ENCODE measurements at regions of chr6 and their contacts with region 1.

Region 1: GRCh38 chr6:44074439-44075136 is 52.7 kb downstream of the MRPL14 start:
- DNase-seq: peak; percentile 83
- H3K4me3 ChIP-seq: no peak overlapping the region
- H3K27ac ChIP-seq: peak overlapping the region; percentile 27
- H3K4me1 ChIP-seq: peaks cover 61% of the 10 kb centered on the region
- H3K27me3 ChIP-seq: no peaks in the 10 kb centered on the region
- CTCF ChIP-seq: peak; percentile 92

Region 2: GRCh38 chr6:43516697-43517504 is 557.7 kb before region 1 on chr6 and contains the starts of genes POLR1C and YIPF3:
- CTCF ChIA-PET with region 1: no interaction called
- dilution Hi-C with region 1: no loop called
- in situ Hi-C with region 1: no loop called
- intact Hi-C with region 1: loop called (anchors 10 kb)
- DNase-seq: peak; percentile 97
- H3K4me3 ChIP-seq: peak within 1 kb of the TSS; percentile 76 to 98 (median 93)
- H3K27ac ChIP-seq: peak within 1 kb of the TSS; percentile 91
- H3K4me1 ChIP-seq: peaks cover 17% of the 10 kb centered on the region
- H3K27me3 ChIP-seq: no peaks in the 10 kb centered on the region
- CTCF ChIP-seq: no peak
- total RNA-seq, gene POLR1C: 28.2 to 50.5 TPM
- total RNA-seq, gene YIPF3: 71.2 to 83.8 TPM

Region 3: GRCh38 chr6:43667245-43668150 is 407.1 kb before region 1 on chr6:
- CTCF ChIA-PET with region 1: interaction called, 7 read pairs
- dilution Hi-C with region 1: no loop called
- in situ Hi-C with region 1: no loop called
- intact Hi-C with region 1: loop called (anchors 1 kb)
- DNase-seq: peak; percentile 69
- H3K4me3 ChIP-seq: no peak overlapping the region
- H3K27ac ChIP-seq: peak overlapping the region; percentile 2
- H3K4me1 ChIP-seq: peaks cover 47% of the 10 kb centered on the region
- H3K27me3 ChIP-seq: no peaks in the 10 kb centered on the region
- CTCF ChIP-seq: peak; percentile 96 to 98

Region 4: GRCh38 chr6:43769526-43770416 is 304.8 kb before region 1 on chr6 and contains the start of gene VEGFA:
- CTCF ChIA-PET with region 1: interaction called, 6 read pairs
- dilution Hi-C with region 1: no loop called
- in situ Hi-C with region 1: loop called in 1 of 2 experiments (anchors 10 kb)
- intact Hi-C with region 1: loop called (anchors 1 kb)
- DNase-seq: peak; percentile 84
- H3K4me3 ChIP-seq: peak within 1 kb of the TSS; percentile 97 to 98 (median 98)
- H3K27ac ChIP-seq: peak within 1 kb of the TSS; percentile 77
- H3K4me1 ChIP-seq: peaks cover 21% of the 10 kb centered on the region
- H3K27me3 ChIP-seq: no peaks in the 10 kb centered on the region
- CTCF ChIP-seq: peak; percentile 98
- total RNA-seq, gene VEGFA: 161 to 313 TPM

Region 5: DNA sequence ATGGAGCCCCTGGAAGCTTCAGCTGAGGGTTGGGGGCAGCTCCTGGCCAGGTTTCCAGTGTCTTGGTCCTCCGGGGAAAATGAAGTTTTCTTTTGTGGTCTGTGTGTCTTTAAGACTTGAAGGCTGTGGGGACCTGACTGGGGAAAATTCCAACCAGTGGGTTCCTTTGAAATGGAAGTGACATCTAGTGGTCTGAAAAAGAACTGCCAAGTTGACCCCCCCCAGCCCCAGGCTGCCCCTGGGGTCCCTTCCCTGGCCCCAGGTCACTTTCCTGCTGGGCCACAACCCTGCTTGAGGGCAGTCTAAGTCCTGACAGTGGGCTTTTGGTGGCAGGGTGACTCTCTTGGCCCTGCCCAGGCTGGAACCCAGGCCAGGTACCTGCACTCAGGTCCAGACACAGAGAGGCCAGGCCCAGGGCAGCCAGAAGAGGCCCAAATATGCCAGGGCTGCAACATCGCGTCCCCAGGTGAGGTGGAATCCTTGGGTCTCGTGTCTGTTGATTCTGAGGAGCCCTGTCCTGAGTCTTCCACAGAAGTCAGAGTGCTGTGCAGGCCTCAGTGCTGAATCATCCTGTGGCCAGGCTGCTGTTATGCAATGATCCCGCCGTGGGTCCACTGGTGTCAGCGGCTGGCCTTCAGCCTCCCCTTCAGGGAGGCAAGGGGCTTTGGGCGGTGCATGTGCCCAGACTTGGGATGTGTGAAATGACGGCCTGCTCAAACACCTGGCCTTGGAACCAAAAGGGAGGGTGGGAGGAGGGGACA is 236.1 kb before region 1 on chr6:
- CTCF ChIA-PET with region 1: interaction called, 6 read pairs
- dilution Hi-C with region 1: no loop called
- in situ Hi-C with region 1: no loop called
- intact Hi-C with region 1: loop called (anchors 1 kb)
- DNase-seq: peak; percentile 20
- H3K4me3 ChIP-seq: no peak overlapping the region
- H3K27ac ChIP-seq: no peak overlapping the region
- H3K4me1 ChIP-seq: peaks cover 9% of the 10 kb centered on the region
- H3K27me3 ChIP-seq: no peaks in the 10 kb centered on the region
- CTCF ChIP-seq: peak; percentile 33 to 59

Region 6: GRCh38 chr6:43926634-43927524 is 147.7 kb before region 1 on chr6:
- CTCF ChIA-PET with region 1: interaction called, 5 read pairs
- dilution Hi-C with region 1: no loop called
- in situ Hi-C with region 1: no loop called
- intact Hi-C with region 1: loop called (anchors 2 kb)
- DNase-seq: peak; percentile 93
- H3K4me3 ChIP-seq: no peak overlapping the region
- H3K27ac ChIP-seq: peak overlapping the region; percentile 69
- H3K4me1 ChIP-seq: peaks cover 45% of the 10 kb centered on the region
- H3K27me3 ChIP-seq: no peaks in the 10 kb centered on the region
- CTCF ChIP-seq: peak; percentile 8 to 54

Measured in mammary epithelial cell (primary cell).